ENCODE measurements at regions of chr1 and their contacts with region 1.

Region 1: DNA sequence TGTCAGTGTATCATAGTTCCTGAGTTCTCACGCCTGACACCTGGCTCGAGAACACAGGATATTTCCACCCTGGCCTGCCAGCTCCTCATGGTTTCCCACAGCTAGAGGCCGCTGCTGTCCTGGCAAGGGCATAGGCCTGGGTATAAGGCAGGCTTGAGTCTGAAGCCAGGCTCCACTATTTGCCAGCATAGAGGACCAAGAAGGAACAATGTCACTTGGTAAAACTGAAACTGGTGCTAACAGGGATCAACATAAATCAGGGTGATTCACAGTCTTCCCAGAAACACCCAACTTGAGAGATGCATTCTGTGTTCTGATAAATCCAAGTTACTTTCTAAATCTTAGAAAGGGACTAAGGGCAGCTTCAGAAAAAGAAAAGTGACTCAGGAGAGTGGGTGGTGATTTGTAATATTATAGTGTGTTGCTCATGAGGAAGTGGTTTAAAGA is 6.9 kb upstream of the S100A2 start:
- DNase-seq: peak; percentile 81 to 87 (median 86)
- ATAC-seq: peak; percentile 89 to 93 (median 92)
- H3K4me3 ChIP-seq: no peak overlapping the region
- H3K27ac ChIP-seq: peak overlapping the region in 11 of 12 donors; percentile 20 to 76 (median 41)
- H3K4me1 ChIP-seq: peaks cover 0 to 36% (median 18%) of the 10 kb centered on the region in 12 donors
- H3K27me3 ChIP-seq: no peaks in the 10 kb centered on the region
- CTCF ChIP-seq: peak; percentile 71 to 91 (median 82)
- POLR2A ChIP-seq: no peak

Region 2: GRCh38 chr1:153510984-153511410 is 61.6 kb before region 1 on chr1:
- intact Hi-C with region 1: loop called (anchors 1 to 2 kb)
- DNase-seq: peak; percentile 82 to 88 (median 84)
- ATAC-seq: peak; percentile 60 to 62 (median 60)
- H3K4me3 ChIP-seq: no peak overlapping the region
- H3K27ac ChIP-seq: no peak overlapping the region
- H3K4me1 ChIP-seq: peaks cover 0 to 32% (median 21%) of the 10 kb centered on the region in 12 donors
- H3K27me3 ChIP-seq: no peaks in the 10 kb centered on the region
- CTCF ChIP-seq: peak; percentile 81 to 97 (median 90)
- POLR2A ChIP-seq: no peak

Region 3: GRCh38 chr1:153617675-153618074 is 45.1 kb after region 1 on chr1:
- intact Hi-C with region 1: loop called in 9 of 10 experiments (anchors 1 to 5 kb)
- DNase-seq: peak; percentile 75 to 88 (median 81)
- ATAC-seq: peak; percentile 57 to 82 (median 68)
- H3K4me3 ChIP-seq: no peak overlapping the region
- H3K27ac ChIP-seq: peak overlapping the region in 9 of 12 donors; percentile 35 to 74 (median 63)
- H3K4me1 ChIP-seq: peaks cover 0 to 32% (median 21%) of the 10 kb centered on the region in 12 donors
- H3K27me3 ChIP-seq: no peaks in the 10 kb centered on the region
- CTCF ChIP-seq: peak in 11 of 12 donors; percentile 44 to 87 (median 61)
- POLR2A ChIP-seq: no peak

Region 4: DNA sequence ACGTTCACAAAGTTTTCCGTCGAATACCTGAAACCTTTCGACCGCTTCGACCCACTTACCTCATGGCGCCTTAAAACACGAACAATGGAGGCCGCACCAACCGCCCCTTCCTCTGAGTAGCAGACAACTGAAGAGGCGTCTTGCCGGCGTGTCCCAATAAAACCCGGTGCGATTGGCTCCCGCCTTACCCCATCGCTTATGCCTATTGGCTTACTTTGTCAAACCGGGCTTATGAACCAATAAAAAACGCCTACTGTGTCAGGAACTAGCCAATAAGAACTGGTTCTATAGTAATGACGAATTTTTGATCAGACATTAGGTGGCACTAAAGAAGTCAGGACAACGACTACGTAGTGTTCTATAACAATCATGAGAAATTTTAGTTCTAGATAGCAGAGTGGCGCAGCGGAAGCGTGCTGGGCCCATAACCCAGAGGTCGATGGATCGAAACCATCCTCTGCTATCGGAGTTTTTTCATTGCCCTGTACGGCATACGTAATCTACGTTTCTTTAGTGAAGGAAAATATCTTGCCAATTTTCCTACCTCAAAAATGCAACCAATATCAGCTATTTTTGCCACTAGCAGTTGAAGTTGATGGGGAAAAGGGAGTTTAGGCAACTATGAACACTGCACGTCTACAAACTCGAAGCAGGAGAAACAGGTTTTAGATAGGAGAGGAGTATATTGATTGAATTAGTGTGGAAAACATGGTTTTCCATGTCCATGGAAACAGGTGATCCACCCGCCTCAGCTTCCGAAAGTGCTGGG is 98.5 kb after region 1 on chr1 and contains the start of gene ILF2:
- intact Hi-C with region 1: loop called in 3 of 10 experiments (anchors 5 to 10 kb)
- DNase-seq: peak; percentile 97 to 98 (median 98)
- ATAC-seq: peak; percentile 95 to 98 (median 97)
- H3K4me3 ChIP-seq: peak within 1 kb of the TSS; percentile 49 to 93 (median 82)
- H3K27ac ChIP-seq: peak within 1 kb of the TSS; percentile 6 to 90 (median 80)
- H3K4me1 ChIP-seq: peaks cover 6 to 26% (median 14%) of the 10 kb centered on the region in 12 donors
- H3K27me3 ChIP-seq: no peaks in the 10 kb centered on the region
- CTCF ChIP-seq: peak in 6 of 12 donors; percentile 11 to 53 (median 39)
- POLR2A ChIP-seq: peak; percentile 81 to 91
- total RNA-seq, gene ILF2: 65.0 to 92.3 (median 74.2) TPM

Region 5: GRCh38 chr1:153775458-153776327 is 203.1 kb after region 1 on chr1:
- intact Hi-C with region 1: loop called in 2 of 10 experiments (anchors 5 kb)
- DNase-seq: peak; percentile 66 to 87 (median 71)
- ATAC-seq: peak in 3 of 4 donors; percentile 6 to 43 (median 37)
- H3K4me3 ChIP-seq: peak overlapping the region; percentile 57 to 91 (median 78)
- H3K27ac ChIP-seq: peak overlapping the region; percentile 74 to 95 (median 85)
- H3K4me1 ChIP-seq: peaks cover 7 to 91% (median 69%) of the 10 kb centered on the region in 12 donors
- H3K27me3 ChIP-seq: no peaks in the 10 kb centered on the region
- CTCF ChIP-seq: peak in 1 of 12 donors; percentile 2
- POLR2A ChIP-seq: no peak

Measured in heart left ventricle (tissue), 16 donors.